BJ (cell line): ENCODE measurements at regions of chr12 and their contacts with region 1.

Region 1: DNA sequence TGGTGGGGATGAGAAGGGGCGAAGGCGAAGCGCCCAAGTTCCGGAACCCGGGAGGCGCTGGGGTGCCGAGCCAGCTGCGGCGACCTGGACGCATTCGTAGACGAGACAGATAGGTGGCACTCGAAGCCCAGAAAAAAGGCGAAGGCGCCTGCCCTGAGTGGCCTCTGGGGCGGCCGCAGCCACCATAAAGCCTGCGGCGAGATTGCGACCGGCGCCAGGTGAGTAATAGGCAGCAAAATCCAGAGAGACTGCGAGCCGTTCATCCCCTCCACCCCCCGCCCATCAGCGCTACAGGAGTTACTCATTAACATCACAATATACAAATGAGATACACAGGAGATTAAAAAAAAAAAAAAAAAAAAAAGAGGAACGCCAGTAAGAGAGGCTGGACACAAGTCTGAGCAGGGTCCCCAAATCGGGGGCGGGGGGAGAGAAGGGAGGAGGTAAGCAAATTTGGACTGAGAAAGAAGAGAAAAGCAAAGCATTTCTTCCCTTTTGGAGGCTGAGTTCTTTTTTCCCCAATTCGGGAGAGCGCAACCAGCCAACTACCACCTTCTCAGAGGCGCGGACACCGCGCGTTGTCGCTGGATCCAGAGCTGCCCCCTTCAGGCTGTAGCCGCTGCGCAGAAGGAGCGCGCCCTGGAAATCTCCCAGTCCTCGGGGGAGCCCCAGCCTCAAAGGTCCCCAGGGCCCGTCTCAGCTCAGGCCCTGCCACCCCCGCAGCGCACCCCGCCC is 15.7 kb downstream of the TBX3 start:
- DNase-seq: no peak
- H3K4me3 ChIP-seq: peak overlapping the region; percentile 43
- H3K27me3 ChIP-seq: no peaks in the 10 kb centered on the region
- CTCF ChIP-seq: peak; percentile 74

Region 2: GRCh38 chr12:114399664-114400211 is 268.6 kb before region 1 on chr12:
- CTCF ChIA-PET with region 1: no interaction called
- POLR2A ChIA-PET with region 1: no interaction called
- DNase-seq: peak; percentile 74
- H3K4me3 ChIP-seq: peak overlapping the region; percentile 90
- H3K27me3 ChIP-seq: no peaks in the 10 kb centered on the region
- CTCF ChIP-seq: no peak

Region 3: DNA sequence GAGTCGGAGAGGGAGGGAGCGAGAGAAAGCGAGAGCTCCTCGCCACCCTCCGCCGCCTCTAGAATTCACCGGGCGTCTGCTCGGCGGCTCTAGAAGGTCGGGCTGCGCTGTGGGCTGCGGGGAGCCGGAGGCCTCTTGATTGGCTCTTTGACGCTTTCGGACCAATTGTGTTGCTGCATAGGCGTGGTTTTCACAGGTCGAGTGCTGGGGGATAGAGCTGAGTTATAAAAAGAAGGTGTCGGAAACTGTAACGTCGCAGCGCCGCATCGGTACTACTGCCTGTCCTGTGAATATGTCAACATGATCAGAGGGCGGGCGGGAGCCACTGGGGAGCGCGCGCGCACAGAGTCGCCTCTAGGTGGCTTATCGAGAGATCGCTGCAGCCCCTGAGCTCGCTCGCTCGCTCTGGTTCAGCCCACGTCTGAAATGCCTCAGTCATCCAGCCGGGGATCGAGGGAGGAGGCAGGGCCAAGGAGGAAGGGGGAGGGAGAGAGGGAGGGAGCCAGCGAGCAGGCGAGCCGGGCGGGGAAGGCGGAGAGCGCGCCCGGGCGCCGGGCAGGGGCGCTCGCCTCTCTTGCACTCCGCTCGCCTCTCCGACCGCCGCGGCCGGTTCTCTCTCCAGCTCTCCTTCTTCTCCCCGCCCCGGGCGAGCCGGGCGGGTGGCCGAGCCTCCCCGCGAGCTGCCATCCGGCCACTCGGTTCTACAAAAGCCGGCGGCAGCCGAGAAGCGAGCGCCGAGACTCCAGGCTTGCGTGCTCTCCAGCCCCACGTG is 16.0 kb after region 1 on chr12 and contains the start of gene TBX3:
- CTCF ChIA-PET with region 1: interaction called, 14 read pairs
- POLR2A ChIA-PET with region 1: interaction called, 12 read pairs
- DNase-seq: peak; percentile 98
- H3K4me3 ChIP-seq: peak within 1 kb of the TSS; percentile 93
- H3K27me3 ChIP-seq: no peaks in the 10 kb centered on the region
- CTCF ChIP-seq: peak; percentile 77
- polyA plus RNA-seq, gene TBX3: 66.4 and 75.7 TPM in 2 replicates

Region 4: GRCh38 chr12:114735680-114736374 is 67.5 kb after region 1 on chr12:
- CTCF ChIA-PET with region 1: no interaction called
- POLR2A ChIA-PET with region 1: no interaction called
- DNase-seq: no peak
- H3K4me3 ChIP-seq: no peak overlapping the region
- H3K27me3 ChIP-seq: no peaks in the 10 kb centered on the region
- CTCF ChIP-seq: no peak

Region 5: GRCh38 chr12:115709540-115710011 is 1041.3 kb after region 1 on chr12:
- CTCF ChIA-PET with region 1: no interaction called
- POLR2A ChIA-PET with region 1: interaction called, 25 read pairs
- DNase-seq: no peak
- H3K4me3 ChIP-seq: no peak overlapping the region
- H3K27me3 ChIP-seq: no peaks in the 10 kb centered on the region
- CTCF ChIP-seq: no peak

Region 6: GRCh38 chr12:115758886-115759620 is 1090.7 kb after region 1 on chr12:
- CTCF ChIA-PET with region 1: interaction called, 59 read pairs
- POLR2A ChIA-PET with region 1: interaction called, 18 read pairs
- DNase-seq: no peak
- H3K4me3 ChIP-seq: peak overlapping the region; percentile 37
- H3K27me3 ChIP-seq: no peaks in the 10 kb centered on the region
- CTCF ChIP-seq: no peak

Region 7: GRCh38 chr12:115916910-115917668 is 1248.8 kb after region 1 on chr12:
- CTCF ChIA-PET with region 1: interaction called, 18 read pairs
- POLR2A ChIA-PET with region 1: interaction called, 3 read pairs
- DNase-seq: no peak
- H3K4me3 ChIP-seq: peak overlapping the region; percentile 39
- H3K27me3 ChIP-seq: 0 out of 2 replicates have a peak, but pooled peaks cover 2% of the 10 kb centered on the region
- CTCF ChIP-seq: peak; percentile 77